Panc1 (cell line): ENCODE measurements at regions of chr7 and their contacts with region 1.

Region 1: GRCh38 chr7:16918288-16918895 is 36.6 kb upstream of the AGR3 start:
- DNase-seq: peak; percentile 32
- ATAC-seq: no peak; the same call in 1 of the 2 replicates
- H3K4me3 ChIP-seq: no peak overlapping the region
- H3K27ac ChIP-seq: peak overlapping the region; percentile 29; the same call in 1 of the 2 replicates
- H3K4me1 ChIP-seq: 0 out of 2 replicates have a peak, but pooled peaks cover 4% of the 10 kb centered on the region
- H3K27me3 ChIP-seq: no peaks in the 10 kb centered on the region
- CTCF ChIP-seq: peak; percentile 81; the same call in 1 of the 2 replicates

Region 2: DNA sequence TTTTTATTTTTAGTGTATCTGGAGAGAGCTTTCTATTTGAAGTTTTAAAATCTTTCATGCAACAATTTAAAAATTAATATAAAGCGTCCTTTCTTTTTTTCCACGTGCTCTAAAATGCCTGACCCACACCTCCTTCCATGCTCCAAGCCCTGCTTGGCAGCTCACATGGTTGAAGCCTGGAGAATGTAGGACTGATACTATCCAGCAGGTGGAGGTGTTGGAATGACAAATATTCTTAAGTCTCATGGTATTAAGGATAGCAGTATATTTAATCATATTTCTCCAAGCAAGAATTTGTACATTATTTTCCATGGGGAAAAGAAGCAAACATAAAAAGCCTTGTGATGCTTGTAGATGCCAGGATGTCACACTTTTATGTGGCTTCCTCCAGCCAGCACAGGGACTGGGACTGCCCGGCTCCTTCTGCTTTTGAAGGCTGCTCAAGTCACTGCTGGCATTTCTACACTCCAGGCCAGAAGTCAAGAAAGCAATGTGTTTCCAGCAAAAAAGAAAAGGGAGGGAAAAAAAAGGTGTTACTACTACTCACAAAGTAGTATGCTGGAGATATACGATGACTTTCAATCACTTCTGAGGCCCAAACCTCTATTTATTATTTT is 222.7 kb before region 1 on chr7:
- CTCF ChIA-PET with region 1: interaction called, 4 read pairs
- POLR2A ChIA-PET with region 1: no interaction called
- in situ Hi-C with region 1: no loop called
- intact Hi-C with region 1: loop called (anchors 2 kb)
- DNase-seq: peak; percentile 71
- ATAC-seq: peak; percentile 89
- H3K4me3 ChIP-seq: no peak overlapping the region
- H3K27ac ChIP-seq: no peak overlapping the region
- H3K4me1 ChIP-seq: no peaks in the 10 kb centered on the region
- H3K27me3 ChIP-seq: no peaks in the 10 kb centered on the region
- CTCF ChIP-seq: peak; percentile 84

Region 3: DNA sequence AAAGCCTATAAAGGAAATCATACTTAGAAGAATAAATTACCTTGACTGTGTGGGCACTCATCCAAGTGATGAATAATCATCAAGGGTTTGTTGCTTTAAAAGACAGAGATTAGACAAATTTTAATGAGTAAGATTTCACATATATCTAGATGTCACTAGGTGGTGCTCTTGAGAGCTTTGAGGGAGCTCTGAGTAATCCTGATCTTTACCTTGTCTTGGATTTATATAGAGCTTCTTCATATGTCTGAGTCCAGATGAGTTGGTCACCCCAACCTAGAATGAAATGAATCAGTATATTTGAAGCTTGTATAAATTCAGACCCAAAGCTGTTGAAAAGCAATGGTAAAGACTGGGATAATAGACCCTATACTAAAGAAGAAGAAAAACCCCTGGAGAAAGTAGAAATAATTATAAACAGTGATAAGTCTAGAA is 117.3 kb before region 1 on chr7:
- CTCF ChIA-PET with region 1: interaction called, 9 read pairs
- POLR2A ChIA-PET with region 1: no interaction called
- in situ Hi-C with region 1: no loop called
- intact Hi-C with region 1: loop called (anchors 1 kb)
- DNase-seq: no peak
- ATAC-seq: peak; percentile 43; the same call in 1 of the 2 replicates
- H3K4me3 ChIP-seq: no peak overlapping the region
- H3K27ac ChIP-seq: peak overlapping the region; percentile 75
- H3K4me1 ChIP-seq: peaks cover 36% of the 10 kb centered on the region
- H3K27me3 ChIP-seq: no peaks in the 10 kb centered on the region
- CTCF ChIP-seq: peak; percentile 75; the same call in 1 of the 2 replicates

Region 4: GRCh38 chr7:16891338-16891737 is 27.1 kb before region 1 on chr7:
- CTCF ChIA-PET with region 1: interaction called, 5 read pairs
- POLR2A ChIA-PET with region 1: no interaction called
- in situ Hi-C with region 1: no loop called
- intact Hi-C with region 1: loop called (anchors 1 kb)
- DNase-seq: peak; percentile 65
- ATAC-seq: peak; percentile 96
- H3K4me3 ChIP-seq: no peak overlapping the region
- H3K27ac ChIP-seq: peak overlapping the region; percentile 53; the same call in 1 of the 2 replicates
- H3K4me1 ChIP-seq: peaks cover 18% of the 10 kb centered on the region
- H3K27me3 ChIP-seq: no peaks in the 10 kb centered on the region
- CTCF ChIP-seq: peak; percentile 81